Calu3 (cell line): ENCODE measurements at regions of chr17 and their contacts with region 1.

Region 1: DNA sequence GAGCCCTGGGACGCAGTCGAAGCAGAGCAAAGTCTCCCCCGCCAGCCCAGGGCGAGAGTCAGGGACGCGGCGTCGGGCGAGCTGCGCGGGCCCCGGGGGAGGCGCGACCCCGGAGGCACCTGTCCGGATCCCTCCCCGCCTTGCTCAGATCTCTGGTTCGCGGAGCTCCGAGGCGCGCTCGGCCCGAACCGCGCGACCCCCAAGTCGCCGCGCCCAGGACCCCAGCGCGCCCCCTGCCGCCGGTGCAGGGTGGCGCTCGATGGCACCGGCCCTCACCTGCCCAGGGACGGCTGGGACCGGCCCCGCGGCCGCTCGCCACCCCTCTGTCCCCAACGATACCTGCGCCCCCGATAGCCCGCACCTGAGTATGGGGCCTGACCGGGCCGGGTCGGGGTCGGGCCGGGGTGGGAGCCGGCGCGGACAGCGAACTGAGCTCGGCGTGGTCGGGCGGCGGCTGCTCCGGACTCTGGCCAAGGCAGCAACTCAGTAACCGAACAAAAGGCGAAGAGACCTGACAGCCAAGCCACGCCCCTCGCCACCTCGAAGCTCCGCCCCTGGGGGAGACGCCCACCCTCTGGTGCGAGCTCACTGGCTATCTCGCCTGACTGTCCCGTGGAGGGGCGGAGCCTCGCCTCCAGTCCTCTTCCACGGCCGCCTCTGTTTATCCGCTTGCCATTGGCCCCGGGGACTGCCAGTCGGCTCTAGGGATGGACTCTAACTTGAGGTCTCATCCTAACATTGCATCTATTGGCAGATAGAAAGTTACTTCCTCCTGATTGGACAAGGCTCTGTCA is at the start of gene JUP:
- DNase-seq: peak; percentile 100
- H3K4me3 Mint-ChIP-seq: peak within 1 kb of the TSS; percentile 95
- H3K27ac Mint-ChIP-seq: peak within 1 kb of the TSS; percentile 93
- H3K4me1 Mint-ChIP-seq: peaks cover 40% of the 10 kb centered on the region
- H3K27me3 Mint-ChIP-seq: no peaks in the 10 kb centered on the region
- CTCF ChIP-seq: peak; percentile 97
- total RNA-seq, gene JUP: 695 and 705 TPM in 2 replicates

Region 2: GRCh38 chr17:41254861-41255260 is 531.6 kb before region 1 on chr17:
- CTCF ChIA-PET with region 1: no interaction called
- intact Hi-C with region 1: no loop called
- DNase-seq: no peak
- H3K4me3 Mint-ChIP-seq: no peak overlapping the region
- H3K27ac Mint-ChIP-seq: no peak overlapping the region
- H3K4me1 Mint-ChIP-seq: no peaks in the 10 kb centered on the region
- H3K27me3 Mint-ChIP-seq: peaks cover 22% of the 10 kb centered on the region
- CTCF ChIP-seq: no peak

Region 3: GRCh38 chr17:41474863-41475262 is 311.6 kb before region 1 on chr17:
- CTCF ChIA-PET with region 1: no interaction called
- intact Hi-C with region 1: no loop called
- DNase-seq: no peak
- H3K4me3 Mint-ChIP-seq: no peak overlapping the region
- H3K27ac Mint-ChIP-seq: no peak overlapping the region
- H3K4me1 Mint-ChIP-seq: no peaks in the 10 kb centered on the region
- H3K27me3 Mint-ChIP-seq: peaks cover 21% of the 10 kb centered on the region
- CTCF ChIP-seq: no peak

Region 4: DNA sequence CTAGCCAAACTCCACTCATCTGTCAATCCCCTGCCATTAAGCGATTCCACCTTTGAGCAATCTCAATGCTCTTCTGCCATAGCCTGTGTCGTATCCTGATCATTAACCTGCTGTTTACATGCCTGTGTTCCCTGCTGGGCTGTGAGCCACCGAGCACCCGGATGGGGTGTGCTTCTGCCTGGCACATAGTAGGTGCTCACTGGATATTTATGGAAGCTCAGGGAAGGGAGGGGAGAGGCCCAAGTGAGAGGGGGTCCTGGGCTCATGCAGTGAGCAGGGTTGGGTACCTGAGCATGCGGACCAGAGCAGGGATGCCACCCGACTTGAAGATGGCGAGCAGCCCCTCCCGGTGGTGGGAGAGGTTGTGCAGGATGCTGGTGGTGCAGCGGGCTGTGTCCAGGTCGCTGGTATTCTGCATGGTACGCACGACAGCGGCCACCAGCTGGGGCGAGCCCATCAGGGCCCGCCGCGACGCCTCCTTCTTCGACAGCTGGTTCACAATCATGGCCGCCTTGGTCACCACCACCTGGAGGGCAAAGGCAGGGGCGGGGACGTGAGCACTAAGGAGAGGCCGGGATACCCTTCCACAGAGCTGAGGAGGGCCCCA is 17.6 kb before region 1 on chr17:
- CTCF ChIA-PET with region 1: interaction called, 63 read pairs
- intact Hi-C with region 1: no loop called
- DNase-seq: no peak
- H3K4me3 Mint-ChIP-seq: no peak overlapping the region
- H3K27ac Mint-ChIP-seq: peak overlapping the region; percentile 42
- H3K4me1 Mint-ChIP-seq: peaks cover 36% of the 10 kb centered on the region
- H3K27me3 Mint-ChIP-seq: no peaks in the 10 kb centered on the region
- CTCF ChIP-seq: no peak

Region 5: DNA sequence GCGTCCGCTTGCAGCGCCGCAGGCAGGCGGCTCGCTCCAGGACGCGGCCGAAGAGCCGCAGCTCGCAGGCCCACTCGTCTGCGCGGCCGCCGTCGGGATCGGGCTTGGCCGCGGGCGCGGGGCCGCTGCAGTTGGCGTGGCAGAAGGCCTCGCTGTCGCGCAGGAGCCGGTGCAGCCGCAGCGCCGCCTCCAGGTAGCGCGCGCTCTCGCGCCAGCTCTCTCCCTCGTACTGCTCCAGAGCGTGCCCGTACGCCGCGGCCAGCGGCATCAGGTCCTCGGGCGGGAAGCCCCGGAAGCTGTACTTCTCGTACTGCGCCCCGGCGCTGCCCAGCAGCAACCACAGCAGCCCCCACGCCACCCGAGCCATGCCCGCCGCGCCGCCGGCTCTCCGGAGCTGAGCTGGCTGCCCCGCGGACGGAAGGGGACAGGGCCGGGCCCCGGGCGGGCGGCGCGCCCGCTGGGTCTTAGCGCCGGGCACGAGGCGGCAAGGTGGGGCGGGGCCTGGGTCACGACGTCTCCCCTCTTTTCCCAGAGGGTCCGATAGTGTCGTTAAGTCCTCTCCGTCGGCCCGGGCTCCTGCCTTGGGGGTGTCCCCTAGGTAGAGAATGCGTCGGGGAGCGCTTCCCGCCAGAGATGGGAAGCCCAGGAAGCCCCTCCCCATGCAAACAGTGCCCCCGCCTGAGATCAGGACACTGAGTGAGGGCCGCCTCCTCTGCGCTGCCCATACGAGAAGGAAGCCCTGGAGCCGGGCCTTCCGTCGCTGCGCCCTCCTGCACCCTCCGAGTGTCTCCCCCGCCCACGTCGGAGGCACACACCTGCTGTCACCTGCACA is 25.3 kb after region 1 on chr17 and contains the start of gene P3H4:
- CTCF ChIA-PET with region 1: interaction called, 12 read pairs
- intact Hi-C with region 1: no loop called
- DNase-seq: peak; percentile 89
- H3K4me3 Mint-ChIP-seq: peak within 1 kb of the TSS; percentile 86
- H3K27ac Mint-ChIP-seq: peak within 1 kb of the TSS; percentile 72
- H3K4me1 Mint-ChIP-seq: peaks cover 32% of the 10 kb centered on the region
- H3K27me3 Mint-ChIP-seq: no peaks in the 10 kb centered on the region
- CTCF ChIP-seq: peak; percentile 76
- total RNA-seq, gene P3H4: 19.9 and 22.5 TPM in 2 replicates